Mammary epithelial cell (primary cell): ENCODE measurements at regions of chr22 and their contacts with region 1.

Region 1: DNA sequence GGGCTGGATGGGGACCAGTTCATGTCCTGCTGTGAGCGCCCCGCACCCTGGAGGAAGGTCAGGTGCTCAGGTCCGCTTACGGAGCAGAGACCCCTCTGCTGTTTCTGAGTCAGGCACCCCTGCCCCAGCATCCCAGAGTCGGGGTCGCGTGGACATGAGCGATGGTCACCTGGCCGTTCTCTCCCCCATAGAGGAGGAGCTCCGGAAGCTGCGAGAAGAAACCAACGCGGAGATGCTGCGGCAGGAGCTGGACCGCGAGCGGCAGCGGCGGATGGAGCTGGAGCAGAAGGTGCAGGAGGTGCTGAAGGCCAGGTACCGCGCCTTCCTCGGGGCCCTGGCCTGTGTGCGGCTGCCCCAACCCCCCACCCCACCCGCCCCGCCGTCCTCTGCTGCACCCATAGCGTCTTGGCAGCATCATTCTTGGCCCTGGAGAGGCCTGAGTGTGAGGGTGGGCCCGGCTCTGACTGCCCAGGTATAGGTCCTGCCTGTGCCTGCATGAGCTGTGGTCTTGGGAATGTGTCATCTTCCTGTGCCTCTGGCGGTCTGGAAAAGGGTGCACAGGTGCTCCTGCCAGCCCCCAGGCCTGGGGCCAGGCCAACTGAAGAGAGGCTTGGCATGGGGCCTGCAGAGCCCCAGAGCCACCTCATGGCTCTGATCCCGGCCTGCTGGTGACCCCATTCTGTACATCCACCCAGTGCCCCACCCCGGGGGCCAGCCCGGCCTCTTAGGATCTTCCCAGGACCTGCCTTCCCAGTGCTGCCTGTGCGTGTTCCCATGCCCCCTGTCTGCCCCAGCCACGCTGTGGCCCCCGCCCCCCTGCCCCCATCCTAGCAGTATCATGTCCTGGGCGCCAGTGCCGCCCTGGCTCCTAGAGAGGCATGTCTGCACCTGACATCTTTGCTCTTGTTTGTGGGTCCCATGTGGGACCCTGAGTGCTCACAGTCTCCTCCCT is 38.1 kb downstream of the GRAMD4 start:
- DNase-seq: peak; percentile 94
- H3K4me3 ChIP-seq: no peak overlapping the region
- H3K27ac ChIP-seq: no peak overlapping the region
- H3K4me1 ChIP-seq: peaks cover 42% of the 10 kb centered on the region
- H3K27me3 ChIP-seq: no peaks in the 10 kb centered on the region
- CTCF ChIP-seq: no peak

Region 2: DNA sequence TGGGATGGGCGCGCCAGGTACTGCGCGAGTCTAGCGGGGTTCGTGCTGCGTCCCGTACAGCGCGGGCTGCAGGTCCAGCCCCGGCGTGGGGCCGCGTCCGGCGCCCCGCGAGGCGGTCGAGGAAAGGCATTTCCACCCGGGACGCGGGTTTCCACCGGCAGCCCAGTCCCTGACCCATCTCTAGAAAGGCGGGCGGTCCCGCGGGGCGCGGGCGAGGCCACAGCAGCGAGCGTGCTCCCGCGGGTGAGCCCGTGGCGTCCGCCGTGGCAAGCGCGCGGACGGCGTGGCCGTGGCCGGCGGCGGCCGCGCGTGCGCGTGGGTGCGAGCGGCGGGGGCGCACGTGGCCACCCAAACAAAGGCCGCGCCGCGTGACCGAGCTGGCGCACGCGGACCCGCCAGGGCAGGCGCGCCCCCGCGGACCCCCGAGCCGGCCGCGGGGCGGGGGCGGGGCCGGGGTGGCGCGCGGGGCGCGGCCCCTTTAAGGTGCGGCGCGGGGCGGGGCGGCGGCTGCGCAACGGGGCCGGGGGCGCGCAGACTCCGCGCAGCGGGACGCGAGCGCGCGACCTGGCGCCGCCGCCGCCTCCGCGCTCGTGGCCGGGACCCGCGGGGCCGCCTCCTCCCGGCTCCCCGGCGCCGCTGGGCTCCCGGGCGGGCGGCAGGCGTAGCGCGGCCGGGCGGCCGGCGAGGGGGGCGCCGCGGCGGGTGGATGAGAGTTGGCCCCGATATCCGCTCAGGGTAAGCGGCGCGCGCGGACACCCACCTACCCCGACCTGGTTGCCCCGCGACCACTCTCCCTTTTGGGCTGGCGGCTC is 81.5 kb before region 1 on chr22:
- CTCF ChIA-PET with region 1: no interaction called
- dilution Hi-C with region 1: no loop called
- in situ Hi-C with region 1: no loop called
- intact Hi-C with region 1: loop called (anchors 5 kb)
- DNase-seq: peak; percentile 39
- H3K4me3 ChIP-seq: peak overlapping the region in 2 of 3 experiments; percentile 63 to 74
- H3K27ac ChIP-seq: no peak overlapping the region
- H3K4me1 ChIP-seq: peaks cover 48% of the 10 kb centered on the region
- H3K27me3 ChIP-seq: no peaks in the 10 kb centered on the region
- CTCF ChIP-seq: no peak

Region 3: DNA sequence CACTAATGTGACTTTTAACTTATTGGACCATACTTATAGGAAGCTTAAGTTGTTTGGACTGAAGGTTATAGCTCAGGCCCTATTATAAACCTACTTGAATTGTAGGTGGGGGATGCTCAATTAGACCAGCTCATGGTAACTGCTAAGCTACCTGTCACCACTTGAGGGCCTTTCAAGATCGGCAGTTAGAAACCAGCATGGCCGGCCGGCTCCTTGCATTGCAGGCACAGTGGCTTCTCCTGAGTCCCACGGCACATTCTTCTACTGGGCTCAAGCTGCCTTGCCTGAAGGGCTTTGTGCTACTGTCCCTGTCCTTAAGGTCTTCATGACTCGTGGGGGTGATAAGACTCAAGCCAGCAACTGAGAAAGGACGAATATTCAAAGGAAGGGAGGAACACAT is 175.0 kb after region 1 on chr22:
- CTCF ChIA-PET with region 1: no interaction called
- dilution Hi-C with region 1: no loop called
- in situ Hi-C with region 1: no loop called
- intact Hi-C with region 1: no loop called
- DNase-seq: peak; percentile 20
- H3K4me3 ChIP-seq: no peak overlapping the region
- H3K27ac ChIP-seq: no peak overlapping the region
- H3K4me1 ChIP-seq: peaks cover 17% of the 10 kb centered on the region
- H3K27me3 ChIP-seq: no peaks in the 10 kb centered on the region
- CTCF ChIP-seq: peak in 1 of 2 donors; percentile 24